ENCODE measurements at regions of chr11 and their contacts with region 1.

Region 1: GRCh38 chr11:128522055-128522942 is 65.1 kb downstream of the ETS1 start:
- DNase-seq: peak; percentile 99
- H3K4me3 ChIP-seq: peak overlapping the region; percentile 85 to 95 (median 87)
- H3K27ac ChIP-seq: peak overlapping the region; percentile 96
- H3K4me1 ChIP-seq: peaks cover 55% of the 10 kb centered on the region
- H3K27me3 ChIP-seq: no peaks in the 10 kb centered on the region
- CTCF ChIP-seq: no peak

Region 2: DNA sequence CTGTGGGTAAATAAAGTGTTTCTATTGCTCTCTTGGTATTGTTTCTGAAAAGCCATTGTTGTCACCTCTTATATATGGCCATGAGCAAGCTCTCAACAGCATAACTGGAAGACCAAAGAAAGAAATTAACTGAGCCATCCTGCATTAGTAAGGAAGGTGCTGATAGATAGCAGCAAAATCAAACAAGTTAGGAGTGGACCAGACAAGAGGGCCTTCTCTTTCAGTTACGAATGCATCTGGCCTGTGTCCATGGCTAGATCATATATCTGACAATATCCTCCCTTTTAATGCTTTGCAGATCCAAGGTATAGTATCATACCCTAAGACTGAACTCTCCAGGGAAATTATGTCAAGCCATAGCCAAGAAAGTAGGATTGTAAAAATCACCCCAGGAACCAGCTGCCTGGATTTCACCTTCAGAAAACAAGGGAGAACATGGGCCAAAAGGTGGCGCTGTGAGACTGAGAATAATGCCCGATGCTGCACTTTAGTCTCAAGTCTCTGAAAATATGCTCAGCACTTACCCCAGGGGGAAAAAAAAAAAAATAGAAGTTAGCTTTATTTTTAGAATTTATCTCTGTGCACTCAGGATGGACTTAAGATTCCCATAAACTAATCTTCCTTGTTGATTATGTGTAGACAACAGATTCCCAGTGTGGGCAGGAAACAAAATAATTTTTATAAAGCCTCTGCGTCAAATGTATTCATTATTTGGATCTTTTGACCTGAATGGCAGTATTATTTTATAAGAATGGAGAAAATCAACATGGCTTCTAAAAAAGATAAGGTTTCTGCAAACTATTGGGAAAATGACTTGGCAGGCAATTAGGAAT is 350.0 kb before region 1 on chr11:
- CTCF ChIA-PET with region 1: no interaction called
- dilution Hi-C with region 1: no loop called
- in situ Hi-C with region 1: no loop called
- intact Hi-C with region 1: loop called (anchors 1 kb)
- DNase-seq: peak; percentile 69
- H3K4me3 ChIP-seq: no peak overlapping the region
- H3K27ac ChIP-seq: peak overlapping the region; percentile 72
- H3K4me1 ChIP-seq: peaks cover 8% of the 10 kb centered on the region
- H3K27me3 ChIP-seq: no peaks in the 10 kb centered on the region
- CTCF ChIP-seq: peak; percentile 81 to 84

Region 3: DNA sequence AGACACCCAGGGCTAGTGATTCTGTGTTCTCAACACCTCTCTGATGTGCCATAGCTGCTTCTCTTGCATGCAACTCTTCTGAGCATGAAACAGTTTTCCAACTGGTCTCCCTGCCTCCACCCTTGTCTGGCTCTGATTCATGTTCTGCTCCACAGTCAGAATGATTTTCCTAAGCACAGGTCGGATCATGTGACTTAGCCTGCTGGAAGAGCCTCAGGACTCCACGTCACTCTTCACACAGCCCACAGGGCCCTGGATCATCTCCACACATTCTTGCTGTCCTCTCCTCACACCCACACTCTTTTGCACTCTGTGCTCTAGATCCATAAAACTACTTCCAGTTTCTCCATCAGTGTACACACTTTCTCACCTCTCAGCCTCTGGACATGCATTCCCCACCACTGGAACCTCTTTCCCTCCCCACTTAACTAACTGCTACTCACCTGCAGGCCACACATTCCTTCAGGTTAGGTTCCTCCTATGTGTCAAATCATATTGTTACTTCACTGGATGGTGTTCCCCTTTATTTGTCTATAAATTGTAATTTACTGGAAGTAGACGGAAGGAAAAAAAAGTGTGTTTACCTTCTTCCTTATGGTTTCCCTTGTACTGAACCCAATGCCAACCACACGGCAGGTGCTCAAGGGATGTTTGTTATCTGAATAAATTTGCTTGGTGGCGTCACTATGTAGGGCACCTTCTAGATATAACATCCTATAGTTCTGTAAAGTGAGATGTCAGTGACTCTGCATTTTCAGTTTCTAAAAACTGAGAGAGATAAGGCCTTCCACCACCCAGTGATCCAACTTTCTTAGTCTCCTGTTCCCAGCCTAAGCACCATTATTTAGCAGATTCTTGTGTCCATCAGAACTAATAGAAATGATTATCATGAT is 68.6 kb before region 1 on chr11:
- CTCF ChIA-PET with region 1: no interaction called
- dilution Hi-C with region 1: no loop called
- in situ Hi-C with region 1: no loop called
- intact Hi-C with region 1: loop called (anchors 2 kb)
- DNase-seq: peak; percentile 94
- H3K4me3 ChIP-seq: no peak overlapping the region
- H3K27ac ChIP-seq: peak overlapping the region; percentile 67
- H3K4me1 ChIP-seq: peaks cover 56% of the 10 kb centered on the region
- H3K27me3 ChIP-seq: no peaks in the 10 kb centered on the region
- CTCF ChIP-seq: no peak

Region 4: DNA sequence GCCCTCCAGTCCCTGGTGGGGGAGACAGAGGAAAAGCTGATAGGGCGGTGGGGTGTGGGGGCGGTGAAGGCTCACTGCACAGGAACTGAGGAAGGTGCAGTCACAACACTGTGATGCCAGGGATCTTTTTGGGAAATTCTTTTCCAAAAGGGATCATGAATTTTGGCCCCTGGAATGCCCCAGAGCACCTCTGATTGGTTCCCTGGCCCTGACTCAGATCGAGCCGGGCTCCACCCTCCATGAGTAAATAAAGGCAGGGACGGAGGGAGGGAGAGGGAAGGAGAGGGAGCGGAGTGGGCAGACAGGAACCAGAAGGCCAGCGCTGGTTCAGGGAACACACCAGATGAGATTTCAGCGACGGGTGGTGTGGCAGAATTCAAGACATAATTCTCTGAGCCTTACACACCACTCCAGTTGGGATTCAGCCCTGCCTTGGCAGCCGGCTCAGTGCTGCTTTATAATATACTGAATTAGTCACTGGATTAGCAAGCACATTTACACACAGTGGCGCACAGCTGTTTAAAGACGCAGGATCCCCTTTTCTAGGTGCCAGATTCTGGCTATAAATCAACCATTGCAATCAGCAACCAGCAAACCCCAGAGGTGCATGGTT is 15.2 kb before region 1 on chr11:
- CTCF ChIA-PET with region 1: interaction called, 4 read pairs
- dilution Hi-C with region 1: no loop called
- in situ Hi-C with region 1: no loop called
- intact Hi-C with region 1: loop called (anchors 1 kb)
- DNase-seq: peak; percentile 90
- H3K4me3 ChIP-seq: peak overlapping the region; percentile 27 to 41 (median 32)
- H3K27ac ChIP-seq: peak overlapping the region; percentile 88
- H3K4me1 ChIP-seq: peaks cover 80% of the 10 kb centered on the region
- H3K27me3 ChIP-seq: no peaks in the 10 kb centered on the region
- CTCF ChIP-seq: no peak

Region 5: DNA sequence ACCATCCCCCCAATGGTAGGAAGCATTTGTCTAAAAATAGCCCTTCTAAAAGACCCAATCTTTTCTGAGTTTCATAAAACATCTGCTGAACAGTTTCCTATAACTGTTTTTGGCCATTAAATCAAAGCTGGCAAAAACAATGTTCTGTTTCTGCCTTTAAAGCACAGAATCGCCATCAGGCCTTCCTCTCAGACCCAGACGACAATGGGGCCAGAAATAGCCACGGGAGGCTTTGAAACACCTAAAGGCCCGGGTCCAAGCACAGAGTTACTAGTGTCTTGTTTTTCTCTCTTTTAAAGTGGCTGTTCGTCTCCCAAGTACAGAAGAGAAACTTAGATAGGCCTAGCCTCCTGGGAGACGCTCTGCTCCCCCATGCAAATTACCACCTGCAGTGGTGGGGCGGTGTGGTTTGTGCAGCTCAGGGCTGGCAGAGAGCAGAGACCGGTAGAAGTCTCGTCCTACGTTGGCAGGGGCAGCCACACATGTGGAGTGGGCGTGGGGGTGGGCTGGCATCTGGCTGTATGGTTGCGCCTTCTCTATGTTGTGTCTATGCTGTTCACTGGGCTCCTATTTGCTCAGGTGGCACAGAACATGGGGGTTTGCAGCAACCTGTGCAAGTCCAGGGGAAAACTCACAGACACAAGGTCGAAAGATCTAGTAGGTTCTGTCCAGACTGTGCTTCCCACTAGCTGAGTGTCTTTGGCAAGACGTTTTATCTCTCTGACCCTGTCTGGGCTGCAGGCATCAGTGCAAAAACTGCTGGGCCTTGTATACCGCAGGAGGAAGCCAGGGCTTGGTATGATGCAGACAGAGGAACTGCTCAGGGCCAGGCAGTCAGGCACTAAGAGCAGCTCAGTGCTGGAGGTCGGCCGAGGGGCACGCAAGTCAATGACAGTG is 88.7 kb after region 1 on chr11:
- CTCF ChIA-PET with region 1: no interaction called
- dilution Hi-C with region 1: no loop called
- in situ Hi-C with region 1: loop called in 1 of 2 experiments (anchors 25 kb)
- intact Hi-C with region 1: no loop called
- DNase-seq: no peak
- H3K4me3 ChIP-seq: no peak overlapping the region
- H3K27ac ChIP-seq: no peak overlapping the region
- H3K4me1 ChIP-seq: no peaks in the 10 kb centered on the region
- H3K27me3 ChIP-seq: peaks cover 6% of the 10 kb centered on the region
- CTCF ChIP-seq: no peak

Region 6: GRCh38 chr11:128831174-128832120 is 309.1 kb after region 1 on chr11:
- CTCF ChIA-PET with region 1: no interaction called
- dilution Hi-C with region 1: no loop called
- in situ Hi-C with region 1: no loop called
- intact Hi-C with region 1: loop called (anchors 1 kb)
- DNase-seq: peak; percentile 58
- H3K4me3 ChIP-seq: no peak overlapping the region
- H3K27ac ChIP-seq: peak overlapping the region; percentile 26
- H3K4me1 ChIP-seq: peaks cover 6% of the 10 kb centered on the region
- H3K27me3 ChIP-seq: no peaks in the 10 kb centered on the region
- CTCF ChIP-seq: peak; percentile 76 to 85